Natural killer cell (primary cell): ENCODE measurements at regions of chr2 and their contacts with region 1.

Region 1: DNA sequence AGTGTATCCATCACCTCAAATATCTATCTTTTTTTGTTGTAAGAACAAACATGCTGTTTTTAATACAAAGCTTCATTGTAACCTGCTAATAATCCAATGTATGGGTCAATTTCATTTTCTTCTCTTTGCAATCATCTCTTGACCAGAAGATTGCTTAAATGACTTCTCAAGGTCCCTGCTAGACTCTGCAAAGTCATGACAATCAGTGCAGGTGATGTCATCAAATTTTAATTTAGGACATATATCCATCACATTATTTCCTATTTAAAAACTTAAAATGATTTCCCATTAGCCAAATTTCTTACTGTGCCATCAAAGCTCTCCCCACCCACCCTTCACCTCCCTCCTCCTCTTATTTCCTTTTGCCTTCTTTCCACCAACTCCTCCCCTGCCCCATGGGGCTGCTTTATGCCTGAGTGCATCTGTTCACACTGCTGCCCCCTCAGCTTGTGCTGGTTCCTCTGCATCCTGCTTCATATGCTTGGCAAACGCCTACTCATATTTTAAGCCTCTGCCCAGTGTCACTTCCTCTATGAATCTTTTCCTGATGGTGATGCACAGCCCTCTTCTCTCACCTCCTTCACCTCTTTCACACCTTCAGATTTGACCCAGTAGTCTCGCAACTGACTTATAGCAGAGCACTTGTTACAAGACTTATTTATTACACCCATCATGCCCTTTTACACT is 20.3 kb downstream of the PLEK start:
- DNase-seq: peak; percentile 59 to 71
- ATAC-seq: peak; percentile 75 to 89 (median 85)
- H3K4me3 ChIP-seq: no peak overlapping the region
- H3K4me3 Mint-ChIP-seq: peak overlapping the region; percentile 70
- H3K27ac ChIP-seq: peak overlapping the region; percentile 74
- H3K27ac Mint-ChIP-seq: peak overlapping the region; percentile 97 to 99
- H3K4me1 ChIP-seq: peaks cover 91% of the 10 kb centered on the region
- H3K4me1 Mint-ChIP-seq: peaks cover 92 to 96% of the 10 kb centered on the region in 2 donors
- H3K27me3 ChIP-seq: no peaks in the 10 kb centered on the region
- H3K27me3 Mint-ChIP-seq: no peaks in the 10 kb centered on the region
- CTCF ChIP-seq: no peak

Region 2: DNA sequence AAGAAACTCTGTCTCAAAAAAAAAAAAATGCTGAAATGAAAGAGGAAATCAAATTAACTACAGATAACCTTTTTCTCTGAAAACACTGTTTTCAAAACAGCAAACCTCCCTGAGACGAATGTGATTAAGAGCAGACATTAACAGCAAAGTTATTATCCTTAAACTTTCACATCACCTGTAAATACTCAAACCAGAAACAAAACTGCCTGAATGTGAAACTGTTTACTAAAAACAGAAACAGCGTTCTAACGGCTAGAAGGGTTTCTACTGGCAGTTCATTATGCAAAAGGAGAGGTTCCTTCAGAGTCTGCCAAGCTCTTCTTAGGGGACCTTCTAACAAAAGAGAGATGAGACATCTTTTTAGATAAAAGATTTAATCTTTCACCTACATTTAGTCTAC is 181.8 kb before region 1 on chr2:
- intact Hi-C with region 1: no loop called
- DNase-seq: peak in 1 of 2 donors; percentile 40
- ATAC-seq: peak; percentile 57 to 77 (median 57)
- H3K4me3 ChIP-seq: no peak overlapping the region
- H3K4me3 Mint-ChIP-seq: peak overlapping the region; percentile 69
- H3K27ac ChIP-seq: peak overlapping the region; percentile 57
- H3K27ac Mint-ChIP-seq: peak overlapping the region; percentile 86 to 89
- H3K4me1 ChIP-seq: peaks cover 4% of the 10 kb centered on the region
- H3K4me1 Mint-ChIP-seq: peaks cover 56 to 61% of the 10 kb centered on the region in 2 donors
- H3K27me3 ChIP-seq: no peaks in the 10 kb centered on the region
- H3K27me3 Mint-ChIP-seq: no peaks in the 10 kb centered on the region
- CTCF ChIP-seq: no peak

Region 3: DNA sequence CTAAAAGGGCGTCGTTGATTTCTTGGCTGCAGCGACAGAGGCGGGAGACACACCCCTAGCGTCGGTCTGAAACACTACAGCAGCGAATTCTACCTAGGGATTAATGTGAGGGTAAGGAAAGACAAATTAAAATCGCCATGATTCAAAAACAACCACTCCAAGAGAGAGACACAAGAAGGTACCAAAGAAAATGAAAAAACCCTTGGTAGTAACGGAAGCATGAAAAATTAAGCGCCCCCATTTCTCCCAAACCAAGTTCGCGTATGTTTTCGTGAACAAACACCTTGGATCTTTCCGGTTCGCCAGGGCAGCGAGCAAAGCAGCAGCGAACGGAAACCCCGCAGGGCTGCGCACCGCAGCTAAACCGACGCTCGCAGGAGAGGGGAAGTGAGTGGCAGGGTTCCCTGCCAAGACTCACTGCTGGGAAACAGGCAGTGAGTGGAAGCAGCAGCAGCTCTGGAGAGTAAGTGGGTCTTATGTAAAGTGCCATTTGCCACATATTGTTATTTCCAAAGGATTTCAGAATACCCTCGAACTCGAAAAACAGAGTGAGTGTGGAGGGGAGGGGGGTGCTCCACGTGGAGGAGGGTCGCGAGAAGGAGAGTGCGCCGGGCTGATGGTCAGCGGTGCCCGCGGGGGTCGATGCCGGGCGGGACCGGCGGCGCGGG is 134.0 kb before region 1 on chr2:
- intact Hi-C with region 1: loop called (anchors 2 kb)
- DNase-seq: peak; percentile 62 to 93
- ATAC-seq: peak; percentile 65 to 79 (median 66)
- H3K4me3 ChIP-seq: peak overlapping the region; percentile 80
- H3K4me3 Mint-ChIP-seq: peak overlapping the region; percentile 94
- H3K27ac ChIP-seq: peak overlapping the region; percentile 95
- H3K27ac Mint-ChIP-seq: peak overlapping the region in 1 of 2 donors; percentile 97
- H3K4me1 ChIP-seq: peaks cover 15% of the 10 kb centered on the region
- H3K4me1 Mint-ChIP-seq: peaks cover 28 to 41% of the 10 kb centered on the region in 2 donors
- H3K27me3 ChIP-seq: no peaks in the 10 kb centered on the region
- H3K27me3 Mint-ChIP-seq: peaks cover 0 to 3% of the 10 kb centered on the region in 2 donors
- CTCF ChIP-seq: peak; percentile 69

Region 4: GRCh38 chr2:68362069-68362468 is 23.3 kb before region 1 on chr2:
- intact Hi-C with region 1: loop called (anchors 1 kb)
- DNase-seq: peak; percentile 78 to 94
- ATAC-seq: peak; percentile 66 to 88 (median 72)
- H3K4me3 ChIP-seq: peak overlapping the region; percentile 20
- H3K4me3 Mint-ChIP-seq: peak overlapping the region; percentile 94
- H3K27ac ChIP-seq: peak overlapping the region; percentile 84
- H3K27ac Mint-ChIP-seq: peak overlapping the region; percentile 95 to 97
- H3K4me1 ChIP-seq: peaks cover 33% of the 10 kb centered on the region
- H3K4me1 Mint-ChIP-seq: peaks cover 61 to 63% of the 10 kb centered on the region in 2 donors
- H3K27me3 ChIP-seq: no peaks in the 10 kb centered on the region
- H3K27me3 Mint-ChIP-seq: no peaks in the 10 kb centered on the region
- CTCF ChIP-seq: peak; percentile 81

Region 5: GRCh38 chr2:68371581-68371980 is 13.8 kb before region 1 on chr2:
- intact Hi-C with region 1: loop called (anchors 1 kb)
- DNase-seq: peak in 1 of 2 donors; percentile 66
- ATAC-seq: peak; percentile 37 to 65 (median 63)
- H3K4me3 ChIP-seq: peak overlapping the region; percentile 12
- H3K4me3 Mint-ChIP-seq: peak overlapping the region; percentile 94
- H3K27ac ChIP-seq: peak overlapping the region; percentile 35
- H3K27ac Mint-ChIP-seq: peak overlapping the region; percentile 95 to 97
- H3K4me1 ChIP-seq: peaks cover 49% of the 10 kb centered on the region
- H3K4me1 Mint-ChIP-seq: peaks cover 89 to 90% of the 10 kb centered on the region in 2 donors
- H3K27me3 ChIP-seq: no peaks in the 10 kb centered on the region
- H3K27me3 Mint-ChIP-seq: no peaks in the 10 kb centered on the region
- CTCF ChIP-seq: no peak

Region 6: GRCh38 chr2:68411397-68412126 is 26.2 kb after region 1 on chr2:
- intact Hi-C with region 1: loop called (anchors 2 kb)
- DNase-seq: peak in 1 of 2 donors; percentile 26
- ATAC-seq: peak; percentile 52 to 64 (median 62)
- H3K4me3 ChIP-seq: no peak overlapping the region
- H3K4me3 Mint-ChIP-seq: peak overlapping the region; percentile 85
- H3K27ac ChIP-seq: peak overlapping the region; percentile 58
- H3K27ac Mint-ChIP-seq: peak overlapping the region; percentile 77 to 88
- H3K4me1 ChIP-seq: peaks cover 24% of the 10 kb centered on the region
- H3K4me1 Mint-ChIP-seq: peaks cover 67 to 70% of the 10 kb centered on the region in 2 donors
- H3K27me3 ChIP-seq: no peaks in the 10 kb centered on the region
- H3K27me3 Mint-ChIP-seq: no peaks in the 10 kb centered on the region
- CTCF ChIP-seq: no peak

Region 7: DNA sequence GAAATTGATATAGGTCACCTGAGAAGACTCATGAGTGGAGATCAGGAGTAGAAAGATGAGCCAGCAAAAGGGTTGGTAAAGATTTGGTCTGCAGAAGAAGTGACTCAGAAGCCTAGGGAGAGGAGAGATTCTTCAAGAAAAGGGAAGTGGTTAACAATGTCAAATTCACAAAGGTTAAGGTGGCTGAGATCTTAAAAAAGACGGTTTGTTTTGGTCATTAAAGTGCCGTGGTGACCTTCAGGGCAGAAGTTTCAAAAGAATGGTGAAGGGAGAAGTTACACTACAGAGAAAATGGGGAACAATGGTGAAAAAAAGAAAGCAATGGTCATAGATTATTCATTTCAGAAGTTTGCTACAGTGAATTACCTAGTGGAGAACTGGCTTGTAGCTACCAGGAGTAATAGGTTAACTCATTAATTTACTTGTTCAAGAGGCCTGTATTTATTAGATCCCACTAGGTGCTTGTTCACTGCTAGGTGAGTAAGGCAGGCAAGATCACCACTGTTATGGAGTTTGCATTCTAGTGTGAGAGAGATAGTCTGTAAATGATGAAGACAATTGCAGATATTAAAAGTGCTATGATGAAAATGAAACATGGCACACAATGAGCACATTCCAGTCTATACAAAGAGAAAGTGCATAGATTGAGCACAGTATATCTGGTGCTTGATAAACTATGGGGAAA is 38.7 kb after region 1 on chr2:
- intact Hi-C with region 1: loop called (anchors 1 kb)
- DNase-seq: peak in 1 of 2 donors; percentile 50
- ATAC-seq: peak; percentile 76 to 84 (median 82)
- H3K4me3 ChIP-seq: no peak overlapping the region
- H3K4me3 Mint-ChIP-seq: no peak overlapping the region
- H3K27ac ChIP-seq: peak overlapping the region; percentile 67
- H3K27ac Mint-ChIP-seq: no peak overlapping the region
- H3K4me1 ChIP-seq: peaks cover 43% of the 10 kb centered on the region
- H3K4me1 Mint-ChIP-seq: peaks cover 41 to 49% of the 10 kb centered on the region in 2 donors
- H3K27me3 ChIP-seq: no peaks in the 10 kb centered on the region
- H3K27me3 Mint-ChIP-seq: no peaks in the 10 kb centered on the region
- CTCF ChIP-seq: no peak

Region 8: DNA sequence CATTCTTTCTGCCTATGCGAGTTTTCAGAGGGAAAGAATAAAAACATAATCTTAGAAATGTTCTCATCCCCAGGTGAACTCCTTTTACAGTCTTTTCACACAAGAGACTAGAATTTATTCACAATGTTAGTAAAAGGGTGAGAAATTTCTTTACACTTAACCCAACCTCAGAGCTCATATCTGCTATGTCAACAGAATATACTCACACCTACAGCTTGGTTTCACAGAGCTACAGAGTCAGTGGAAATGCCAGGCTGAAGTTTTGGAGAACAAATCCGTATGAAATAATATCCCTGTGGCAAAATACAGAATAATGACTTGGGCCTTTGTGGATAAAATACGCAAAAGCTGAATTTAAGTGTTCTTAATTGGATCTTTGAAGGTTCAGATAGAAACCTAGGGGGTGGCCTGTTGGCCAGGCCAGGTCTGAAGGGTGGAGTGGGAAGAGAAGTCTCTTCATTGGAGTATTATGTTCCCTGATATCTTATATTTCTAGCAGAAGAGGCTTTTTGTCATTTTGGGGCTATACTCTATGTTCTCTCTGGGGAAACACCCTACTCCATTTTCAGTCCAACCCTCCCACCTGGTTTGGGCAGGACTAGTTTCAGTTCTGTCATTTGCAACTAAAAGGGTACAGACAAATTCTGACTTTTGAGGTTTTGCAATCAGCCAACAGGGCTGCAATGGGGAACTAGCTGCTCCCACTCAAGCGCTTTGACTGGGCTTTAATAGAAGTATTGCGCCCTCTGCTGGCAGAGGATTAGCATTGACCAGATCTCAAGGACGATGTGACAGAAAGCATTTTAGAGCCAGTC is 56.0 kb after region 1 on chr2:
- intact Hi-C with region 1: loop called (anchors 1 kb)
- DNase-seq: peak; percentile 71 to 94
- ATAC-seq: peak; percentile 80 to 96 (median 86)
- H3K4me3 ChIP-seq: no peak overlapping the region
- H3K4me3 Mint-ChIP-seq: peak overlapping the region; percentile 85
- H3K27ac ChIP-seq: peak overlapping the region; percentile 95
- H3K27ac Mint-ChIP-seq: peak overlapping the region; percentile 97 to 99
- H3K4me1 ChIP-seq: peaks cover 24% of the 10 kb centered on the region
- H3K4me1 Mint-ChIP-seq: peaks cover 42 to 43% of the 10 kb centered on the region in 2 donors
- H3K27me3 ChIP-seq: no peaks in the 10 kb centered on the region
- H3K27me3 Mint-ChIP-seq: no peaks in the 10 kb centered on the region
- CTCF ChIP-seq: peak; percentile 93